GM12878 (cell line): ENCODE measurements at regions of chr17 and their contacts with region 1.

Region 1: GRCh38 chr17:59311130-59311920 is 20.1 kb upstream of the YPEL2 start:
- DNase-seq: peak; percentile 28
- ATAC-seq: peak; percentile 99
- H3K4me3 ChIP-seq: no peak overlapping the region
- H3K27ac ChIP-seq: no peak overlapping the region
- H3K4me1 ChIP-seq: no peaks in the 10 kb centered on the region
- H3K27me3 ChIP-seq: no peaks in the 10 kb centered on the region
- CTCF ChIP-seq: peak; percentile 68 to 86 (median 85)
- EP300 ChIP-seq: no peak
- POLR2A ChIP-seq: no peak
- RAD21 ChIP-seq: peak; percentile 88

Region 2: DNA sequence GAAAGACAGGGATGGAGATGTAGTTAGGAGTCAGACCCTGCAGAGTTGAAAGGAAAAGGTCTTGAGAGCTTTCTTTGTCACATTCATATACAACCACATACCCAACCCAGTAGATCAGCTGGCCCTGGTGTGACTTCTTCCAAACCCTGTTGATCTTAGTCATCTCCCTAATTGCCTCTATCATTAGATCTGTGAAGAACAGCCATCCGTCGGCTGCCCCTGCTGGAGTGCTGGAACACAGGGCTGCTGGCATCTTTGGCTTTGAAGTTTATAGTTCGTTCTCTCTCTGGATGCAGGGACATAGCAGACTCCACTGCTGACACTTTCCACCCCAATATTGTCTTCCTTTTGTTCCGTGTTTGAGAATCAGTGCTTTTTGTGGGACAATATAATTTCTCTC is 111.9 kb before region 1 on chr17:
- CTCF ChIA-PET with region 1: no interaction called
- POLR2A ChIA-PET with region 1: no interaction called
- RAD21 ChIA-PET with region 1: no interaction called
- SMC1A ChIA-PET with region 1: no interaction called
- in situ Hi-C with region 1: no loop called
- intact Hi-C with region 1: no loop called
- DNase-seq: no peak
- ATAC-seq: no peak
- H3K4me3 ChIP-seq: no peak overlapping the region
- H3K27ac ChIP-seq: no peak overlapping the region
- H3K4me1 ChIP-seq: no peaks in the 10 kb centered on the region
- H3K27me3 ChIP-seq: no peaks in the 10 kb centered on the region
- CTCF ChIP-seq: no peak
- EP300 ChIP-seq: no peak
- POLR2A ChIP-seq: no peak
- RAD21 ChIP-seq: no peak

Region 3: DNA sequence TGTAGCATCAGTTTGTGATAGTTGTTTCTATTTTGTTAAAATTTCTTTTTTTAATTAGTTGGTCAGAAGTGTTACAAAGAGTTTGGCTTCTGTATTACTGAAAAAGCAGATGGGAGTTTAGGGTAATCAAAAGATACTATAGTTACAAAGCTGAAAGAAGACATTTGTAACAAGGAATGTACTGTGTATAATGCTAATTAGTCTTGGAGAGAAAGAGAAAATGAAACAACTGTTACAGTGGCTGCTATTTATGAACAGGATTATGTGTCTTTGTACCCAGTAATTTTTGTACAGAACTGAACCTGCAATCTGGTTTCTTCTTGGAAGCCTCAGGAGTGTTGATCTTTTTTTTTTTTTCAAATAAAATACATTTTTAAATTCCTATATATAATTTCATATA is 76.7 kb before region 1 on chr17:
- CTCF ChIA-PET with region 1: no interaction called
- POLR2A ChIA-PET with region 1: no interaction called
- RAD21 ChIA-PET with region 1: no interaction called
- SMC1A ChIA-PET with region 1: no interaction called
- in situ Hi-C with region 1: no loop called
- intact Hi-C with region 1: no loop called
- DNase-seq: no peak
- ATAC-seq: peak; percentile 78
- H3K4me3 ChIP-seq: no peak overlapping the region
- H3K27ac ChIP-seq: no peak overlapping the region
- H3K4me1 ChIP-seq: no peaks in the 10 kb centered on the region
- H3K27me3 ChIP-seq: no peaks in the 10 kb centered on the region
- CTCF ChIP-seq: no peak
- EP300 ChIP-seq: no peak
- POLR2A ChIP-seq: no peak
- RAD21 ChIP-seq: no peak

Region 4: GRCh38 chr17:59331129-59331928 is 20.0 kb after region 1 on chr17 and contains the start of gene YPEL2:
- CTCF ChIA-PET with region 1: interaction called, 32 read pairs
- POLR2A ChIA-PET with region 1: no interaction called
- RAD21 ChIA-PET with region 1: interaction called, 15 read pairs
- SMC1A ChIA-PET with region 1: interaction called, 26 read pairs
- in situ Hi-C with region 1: no loop called
- intact Hi-C with region 1: no loop called
- DNase-seq: peak; percentile 41
- ATAC-seq: peak; percentile 97
- H3K4me3 ChIP-seq: peak within 1 kb of the TSS; percentile 76
- H3K27ac ChIP-seq: no peak within 1 kb of the TSS
- H3K4me1 ChIP-seq: peaks cover 17% of the 10 kb centered on the region
- H3K27me3 ChIP-seq: peaks cover 0 to 7% of the 10 kb centered on the region in 2 experiments; a peak in 2 of 4 replicates
- CTCF ChIP-seq: no peak
- EP300 ChIP-seq: no peak
- POLR2A ChIP-seq: peak; percentile 51; the same call in 1 of the 2 replicates
- RAD21 ChIP-seq: no peak
- polyA plus RNA-seq, gene YPEL2: 0.11 to 0.18 TPM

Region 5: DNA sequence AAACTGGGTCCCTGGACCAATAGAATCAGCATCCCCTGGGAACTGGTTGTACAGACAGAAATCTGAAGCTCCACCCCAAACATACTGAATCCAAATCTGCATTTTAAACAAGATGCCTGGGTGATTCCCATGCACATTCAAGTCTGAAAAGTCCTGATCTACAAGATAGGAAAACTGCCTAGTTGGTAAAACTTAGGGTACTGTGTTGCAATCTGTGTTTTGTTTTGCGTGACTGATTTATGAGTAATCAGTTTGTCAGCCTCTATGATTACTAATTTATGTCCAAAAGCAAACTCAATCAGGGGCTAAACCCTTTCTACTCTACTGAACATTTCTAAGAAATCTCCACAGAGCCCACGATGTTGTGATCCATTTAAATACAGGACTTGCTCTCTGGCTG is 123.9 kb after region 1 on chr17:
- CTCF ChIA-PET with region 1: interaction called, 383 read pairs
- POLR2A ChIA-PET with region 1: no interaction called
- RAD21 ChIA-PET with region 1: interaction called, 169 read pairs
- SMC1A ChIA-PET with region 1: interaction called, 217 read pairs
- in situ Hi-C with region 1: loop called (anchors 5 kb)
- intact Hi-C with region 1: loop called (anchors 1 kb)
- DNase-seq: no peak
- ATAC-seq: peak; percentile 26; the same call in 2 of the 3 replicates
- H3K4me3 ChIP-seq: no peak overlapping the region
- H3K27ac ChIP-seq: no peak overlapping the region
- H3K4me1 ChIP-seq: peaks cover 17% of the 10 kb centered on the region
- H3K27me3 ChIP-seq: no peaks in the 10 kb centered on the region
- CTCF ChIP-seq: no peak
- EP300 ChIP-seq: no peak
- POLR2A ChIP-seq: no peak
- RAD21 ChIP-seq: no peak

Region 6: GRCh38 chr17:59521204-59522126 is 210.1 kb after region 1 on chr17:
- CTCF ChIA-PET with region 1: interaction called, 12 read pairs
- POLR2A ChIA-PET with region 1: no interaction called
- RAD21 ChIA-PET with region 1: interaction called, 8 read pairs
- SMC1A ChIA-PET with region 1: interaction called, 6 read pairs
- in situ Hi-C with region 1: no loop called
- intact Hi-C with region 1: loop called (anchors 1 kb)
- DNase-seq: peak; percentile 19
- ATAC-seq: peak; percentile 91
- H3K4me3 ChIP-seq: no peak overlapping the region
- H3K27ac ChIP-seq: no peak overlapping the region
- H3K4me1 ChIP-seq: no peaks in the 10 kb centered on the region
- H3K27me3 ChIP-seq: peaks cover 0 to 2% of the 10 kb centered on the region in 2 experiments; a peak in 1 of 4 replicates
- CTCF ChIP-seq: peak; percentile 83 to 94 (median 90)
- EP300 ChIP-seq: no peak
- POLR2A ChIP-seq: no peak
- RAD21 ChIP-seq: peak; percentile 84